Panc1 (cell line): ENCODE measurements at regions of chr1 and their contacts with region 1.

Region 1: GRCh38 chr1:162485236-162485635 is 12.4 kb upstream of the UHMK1 start:
- DNase-seq: no peak
- ATAC-seq: no peak
- H3K4me3 ChIP-seq: no peak overlapping the region
- H3K27ac ChIP-seq: no peak overlapping the region
- H3K4me1 ChIP-seq: no peaks in the 10 kb centered on the region
- H3K27me3 ChIP-seq: no peaks in the 10 kb centered on the region
- CTCF ChIP-seq: no peak

Region 2: DNA sequence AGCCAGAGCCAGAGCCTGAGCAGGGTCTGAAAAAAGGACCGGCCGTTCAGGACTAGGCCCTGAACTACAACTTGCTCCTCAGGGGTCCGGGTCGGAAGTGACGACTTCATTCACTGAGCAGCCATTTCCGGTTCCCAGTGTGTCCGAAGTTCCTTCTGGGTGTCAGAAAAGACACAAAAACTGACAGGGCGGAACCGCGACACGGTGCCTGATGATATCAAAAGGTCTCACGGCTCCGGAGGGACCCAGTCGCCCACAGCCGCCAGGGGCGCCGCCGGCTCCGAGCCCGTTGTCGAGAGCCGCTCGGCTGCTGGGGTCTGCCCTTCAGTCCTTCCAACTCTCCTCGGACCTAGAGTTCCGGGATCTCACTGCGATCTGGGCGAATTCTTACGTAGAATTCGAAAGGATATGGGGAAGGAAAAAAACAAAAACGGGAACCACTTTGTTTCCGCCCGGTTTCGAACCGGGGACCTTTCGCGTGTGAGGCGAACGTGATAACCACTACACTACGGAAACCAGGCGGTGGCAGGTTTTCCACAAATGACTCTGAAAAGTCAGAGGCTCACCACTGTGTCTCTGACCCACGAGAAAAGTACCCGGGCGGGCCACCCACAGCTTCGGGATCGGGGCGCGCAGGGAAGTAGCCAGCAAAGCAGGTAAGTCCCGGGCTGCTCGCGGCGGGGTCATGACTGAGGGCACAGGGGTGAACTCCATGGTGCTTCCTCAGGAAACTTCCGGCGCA is 1085.8 kb before region 1 on chr1:
- CTCF ChIA-PET with region 1: no interaction called
- POLR2A ChIA-PET with region 1: interaction called, 16 read pairs
- in situ Hi-C with region 1: no loop called
- intact Hi-C with region 1: no loop called
- DNase-seq: peak; percentile 91
- ATAC-seq: peak; percentile 82
- H3K4me3 ChIP-seq: peak overlapping the region; percentile 74 to 82
- H3K27ac ChIP-seq: peak overlapping the region; percentile 100
- H3K4me1 ChIP-seq: peaks cover 39% of the 10 kb centered on the region
- H3K27me3 ChIP-seq: no peaks in the 10 kb centered on the region
- CTCF ChIP-seq: no peak; the same call in 1 of the 2 replicates